PC-3 (cell line): ENCODE measurements at regions of chr2 and their contacts with region 1.

Region 1: DNA sequence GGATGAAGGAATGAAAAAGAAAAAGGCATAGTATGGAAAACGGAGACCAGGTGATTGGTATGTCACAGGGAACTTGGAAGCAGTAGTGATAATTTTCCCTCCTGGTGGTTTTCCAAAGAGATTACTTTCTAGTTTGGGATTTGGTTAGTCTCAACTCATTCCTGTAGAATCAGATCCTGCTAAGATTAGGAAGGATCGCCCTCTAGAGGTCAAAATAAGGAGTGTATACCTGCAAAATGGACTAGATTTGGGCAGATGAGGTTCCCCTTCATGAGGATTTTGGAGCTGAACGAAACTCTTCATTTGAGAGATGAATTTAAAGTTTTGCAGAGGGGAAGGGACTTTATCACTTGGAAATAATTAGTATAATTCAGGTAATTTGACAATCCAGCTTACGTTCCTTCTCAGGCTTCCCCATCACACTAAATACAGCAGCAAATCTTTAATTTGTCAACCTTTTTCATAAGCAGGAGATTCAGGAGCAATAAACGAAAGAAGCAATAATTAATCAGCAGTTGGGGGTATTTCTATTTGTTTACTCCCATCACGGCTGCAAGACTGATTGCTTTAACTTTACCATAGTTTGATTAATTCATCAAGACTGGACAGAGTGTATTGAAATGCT is 65.2 kb downstream of the CCDC195 start:
- DNase-seq: peak; percentile 77
- ATAC-seq: peak; percentile 85
- H3K4me3 ChIP-seq: no peak overlapping the region
- H3K27ac ChIP-seq: no peak overlapping the region
- H3K4me1 ChIP-seq: no peaks in the 10 kb centered on the region
- H3K27me3 ChIP-seq: no peaks in the 10 kb centered on the region
- CTCF ChIP-seq: peak; percentile 85

Region 2: GRCh38 chr2:224357098-224357901 is 293.6 kb before region 1 on chr2:
- CTCF ChIA-PET with region 1: no interaction called
- POLR2A ChIA-PET with region 1: no interaction called
- intact Hi-C with region 1: loop called (anchors 1 kb)
- DNase-seq: peak; percentile 75
- ATAC-seq: peak; percentile 47
- H3K4me3 ChIP-seq: no peak overlapping the region
- H3K27ac ChIP-seq: no peak overlapping the region
- H3K4me1 ChIP-seq: peaks cover 16% of the 10 kb centered on the region
- H3K27me3 ChIP-seq: no peaks in the 10 kb centered on the region; the same call in 1 of the 2 replicates
- CTCF ChIP-seq: peak; percentile 87

Region 3: GRCh38 chr2:224449212-224450147 is 201.4 kb before region 1 on chr2:
- CTCF ChIA-PET with region 1: no interaction called
- POLR2A ChIA-PET with region 1: no interaction called
- intact Hi-C with region 1: loop called (anchors 2 kb)
- DNase-seq: peak; percentile 48
- ATAC-seq: peak; percentile 55
- H3K4me3 ChIP-seq: no peak overlapping the region
- H3K27ac ChIP-seq: no peak overlapping the region
- H3K4me1 ChIP-seq: peaks cover 4% of the 10 kb centered on the region; the same call in 1 of the 2 replicates
- H3K27me3 ChIP-seq: no peaks in the 10 kb centered on the region
- CTCF ChIP-seq: peak; percentile 82

Region 4: DNA sequence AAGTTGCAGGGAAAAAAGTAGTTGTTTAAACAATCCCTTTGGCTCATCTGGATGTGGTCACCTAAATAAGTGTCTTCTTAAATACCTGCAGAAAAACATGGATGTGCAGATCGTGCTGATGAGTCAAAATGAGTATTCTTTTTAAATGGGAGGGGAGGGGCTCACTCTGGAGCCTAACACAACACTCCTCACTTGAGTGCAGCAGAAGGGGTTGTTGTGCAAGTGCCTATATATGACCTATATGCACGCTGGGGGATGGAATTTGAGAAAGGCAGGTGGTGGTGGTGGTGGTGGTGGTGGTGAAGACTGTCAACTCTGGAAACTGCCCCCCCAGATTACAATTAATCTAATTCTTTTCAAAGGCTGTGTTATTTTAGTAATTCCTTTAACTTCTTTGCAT is 171.1 kb before region 1 on chr2:
- CTCF ChIA-PET with region 1: no interaction called
- POLR2A ChIA-PET with region 1: no interaction called
- intact Hi-C with region 1: loop called (anchors 10 kb)
- DNase-seq: peak; percentile 38
- ATAC-seq: no peak
- H3K4me3 ChIP-seq: no peak overlapping the region
- H3K27ac ChIP-seq: no peak overlapping the region
- H3K4me1 ChIP-seq: peaks cover 43% of the 10 kb centered on the region
- H3K27me3 ChIP-seq: no peaks in the 10 kb centered on the region
- CTCF ChIP-seq: no peak

Region 5: GRCh38 chr2:224561234-224562005 is 89.5 kb before region 1 on chr2:
- CTCF ChIA-PET with region 1: no interaction called
- POLR2A ChIA-PET with region 1: interaction called, 17 read pairs
- intact Hi-C with region 1: no loop called
- DNase-seq: no peak
- ATAC-seq: no peak
- H3K4me3 ChIP-seq: no peak overlapping the region
- H3K27ac ChIP-seq: peak overlapping the region; percentile 96
- H3K4me1 ChIP-seq: peaks cover 33% of the 10 kb centered on the region
- H3K27me3 ChIP-seq: no peaks in the 10 kb centered on the region
- CTCF ChIP-seq: no peak

Region 6: GRCh38 chr2:224585205-224586088 is 65.5 kb before region 1 on chr2 and contains the start of gene CUL3:
- CTCF ChIA-PET with region 1: interaction called, 4 read pairs
- POLR2A ChIA-PET with region 1: no interaction called
- intact Hi-C with region 1: loop called (anchors 5 kb)
- DNase-seq: peak; percentile 95
- ATAC-seq: peak; percentile 90
- H3K4me3 ChIP-seq: peak within 1 kb of the TSS; percentile 76
- H3K27ac ChIP-seq: peak within 1 kb of the TSS; percentile 43
- H3K4me1 ChIP-seq: peaks cover 25% of the 10 kb centered on the region
- H3K27me3 ChIP-seq: no peaks in the 10 kb centered on the region
- CTCF ChIP-seq: no peak
- total RNA-seq, gene CUL3: 50.4 and 54.9 TPM in 2 replicates

Region 7: DNA sequence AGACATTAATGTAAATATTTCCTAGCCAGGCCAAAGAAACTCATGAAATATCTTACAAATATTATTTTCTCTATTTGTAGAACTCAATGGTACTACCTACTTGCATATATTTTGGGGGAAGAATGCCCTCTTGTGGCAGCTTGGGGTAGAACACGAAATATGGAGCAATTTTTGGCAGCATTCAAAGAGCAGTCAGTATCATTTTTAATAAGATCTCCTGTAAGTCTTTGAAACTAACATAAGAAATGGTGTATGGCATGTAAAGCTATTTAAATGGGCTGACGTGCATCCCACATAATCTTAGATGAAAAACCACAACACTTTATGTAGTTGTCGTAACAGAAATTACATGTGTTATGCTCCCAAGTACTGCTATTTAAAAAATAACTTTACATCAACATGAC is 127.5 kb after region 1 on chr2:
- CTCF ChIA-PET with region 1: no interaction called
- POLR2A ChIA-PET with region 1: no interaction called
- intact Hi-C with region 1: loop called (anchors 2 kb)
- DNase-seq: peak; percentile 77
- ATAC-seq: peak; percentile 73
- H3K4me3 ChIP-seq: no peak overlapping the region
- H3K27ac ChIP-seq: no peak overlapping the region
- H3K4me1 ChIP-seq: no peaks in the 10 kb centered on the region
- H3K27me3 ChIP-seq: no peaks in the 10 kb centered on the region
- CTCF ChIP-seq: peak; percentile 89

Region 8: GRCh38 chr2:224904381-224904780 is 253.5 kb after region 1 on chr2:
- CTCF ChIA-PET with region 1: no interaction called
- POLR2A ChIA-PET with region 1: no interaction called
- intact Hi-C with region 1: no loop called
- DNase-seq: peak; percentile 15
- ATAC-seq: peak; percentile 88
- H3K4me3 ChIP-seq: no peak overlapping the region
- H3K27ac ChIP-seq: no peak overlapping the region
- H3K4me1 ChIP-seq: no peaks in the 10 kb centered on the region
- H3K27me3 ChIP-seq: no peaks in the 10 kb centered on the region
- CTCF ChIP-seq: no peak